ENCODE measurements at regions of chr14 and their contacts with region 1.

Region 1: GRCh38 chr14:88792572-88793258 is at the start of gene EML5:
- DNase-seq: peak; percentile 91
- H3K4me3 ChIP-seq: peak within 1 kb of the TSS; percentile 59 to 62
- H3K27ac ChIP-seq: peak within 1 kb of the TSS in 1 of 2 experiments; percentile 94; a peak in 2 of 4 replicates
- H3K4me1 ChIP-seq: peaks cover 0 to 2% of the 10 kb centered on the region in 2 experiments; a peak in 2 of 4 replicates
- H3K27me3 ChIP-seq: peaks cover 20% of the 10 kb centered on the region
- CTCF ChIP-seq: no peak
- EP300 ChIP-seq: no peak
- RAD21 ChIP-seq: peak; percentile 62
- polyA plus RNA-seq, gene EML5: 0.23 and 1.1 TPM in 2 replicates

Region 2: GRCh38 chr14:88667555-88668273 is 125.0 kb before region 1 on chr14:
- CTCF ChIA-PET with region 1: interaction called, 10 read pairs
- POLR2A ChIA-PET with region 1: interaction called, 4 read pairs
- DNase-seq: peak; percentile 63
- H3K4me3 ChIP-seq: no peak overlapping the region; a peak in 1 of 4 replicates
- H3K27ac ChIP-seq: peak overlapping the region in 1 of 2 experiments; percentile 85; a peak in 2 of 4 replicates
- H3K4me1 ChIP-seq: peaks cover 0 to 24% of the 10 kb centered on the region in 2 experiments; a peak in 2 of 4 replicates
- H3K27me3 ChIP-seq: no peaks in the 10 kb centered on the region
- CTCF ChIP-seq: peak; percentile 90
- EP300 ChIP-seq: peak in 1 of 2 experiments; percentile 22; a peak in 1 of 4 replicates
- RAD21 ChIP-seq: peak; percentile 89

Region 3: GRCh38 chr14:88765130-88765529 is 27.6 kb before region 1 on chr14:
- CTCF ChIA-PET with region 1: no interaction called
- POLR2A ChIA-PET with region 1: no interaction called
- DNase-seq: no peak
- H3K4me3 ChIP-seq: no peak overlapping the region
- H3K27ac ChIP-seq: no peak overlapping the region
- H3K4me1 ChIP-seq: no peaks in the 10 kb centered on the region; a peak in 1 of 4 replicates
- H3K27me3 ChIP-seq: no peaks in the 10 kb centered on the region
- CTCF ChIP-seq: no peak
- EP300 ChIP-seq: no peak
- RAD21 ChIP-seq: no peak

Region 4: DNA sequence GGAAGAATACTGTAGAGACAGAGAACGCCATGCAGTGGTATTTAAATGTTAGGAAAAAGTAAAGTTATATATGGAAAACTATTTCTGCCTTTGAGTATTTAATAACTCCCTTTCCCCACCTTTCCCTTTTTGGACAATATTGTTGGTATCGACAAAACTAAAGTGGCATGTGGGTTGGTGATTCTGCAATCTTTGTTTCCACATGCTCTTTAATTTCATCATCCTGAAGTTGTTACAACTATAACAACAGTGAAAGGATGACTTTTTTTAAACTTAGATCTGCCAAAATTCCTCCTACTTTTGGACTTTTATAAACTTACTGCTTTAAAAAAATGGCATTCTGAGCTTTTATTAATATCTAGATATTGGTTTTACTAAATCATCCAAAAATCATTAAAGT is 57.0 kb after region 1 on chr14:
- CTCF ChIA-PET with region 1: interaction called, 12 read pairs
- POLR2A ChIA-PET with region 1: interaction called, 6 read pairs
- DNase-seq: no peak
- H3K4me3 ChIP-seq: no peak overlapping the region
- H3K27ac ChIP-seq: peak overlapping the region in 1 of 2 experiments; percentile 60; a peak in 2 of 4 replicates
- H3K4me1 ChIP-seq: peaks cover 0 to 29% of the 10 kb centered on the region in 2 experiments; a peak in 2 of 4 replicates
- H3K27me3 ChIP-seq: no peaks in the 10 kb centered on the region
- CTCF ChIP-seq: no peak
- EP300 ChIP-seq: no peak
- RAD21 ChIP-seq: no peak

Region 5: GRCh38 chr14:88904864-88905263 is 112.1 kb after region 1 on chr14:
- CTCF ChIA-PET with region 1: interaction called, 14 read pairs
- POLR2A ChIA-PET with region 1: interaction called, 34 read pairs
- DNase-seq: peak; percentile 26
- H3K4me3 ChIP-seq: no peak overlapping the region
- H3K27ac ChIP-seq: peak overlapping the region; percentile 24 to 100; a peak in 3 of 4 replicates
- H3K4me1 ChIP-seq: peaks cover 0 to 40% of the 10 kb centered on the region in 2 experiments; a peak in 2 of 4 replicates
- H3K27me3 ChIP-seq: no peaks in the 10 kb centered on the region
- CTCF ChIP-seq: no peak
- EP300 ChIP-seq: no peak
- RAD21 ChIP-seq: no peak

Region 6: GRCh38 chr14:88986146-88986841 is 193.6 kb after region 1 on chr14:
- CTCF ChIA-PET with region 1: interaction called, 5 read pairs
- POLR2A ChIA-PET with region 1: interaction called, 13 read pairs
- DNase-seq: peak; percentile 69
- H3K4me3 ChIP-seq: no peak overlapping the region
- H3K27ac ChIP-seq: peak overlapping the region; percentile 84 to 100
- H3K4me1 ChIP-seq: peaks cover 0 to 59% of the 10 kb centered on the region in 2 experiments; a peak in 2 of 4 replicates
- H3K27me3 ChIP-seq: no peaks in the 10 kb centered on the region
- CTCF ChIP-seq: no peak
- EP300 ChIP-seq: peak; percentile 33 to 78; a peak in 3 of 4 replicates
- RAD21 ChIP-seq: peak; percentile 2; the same call in 1 of the 2 replicates